SK-N-SH (cell line): ENCODE measurements at regions of chr2 and their contacts with region 1.

Region 1: DNA sequence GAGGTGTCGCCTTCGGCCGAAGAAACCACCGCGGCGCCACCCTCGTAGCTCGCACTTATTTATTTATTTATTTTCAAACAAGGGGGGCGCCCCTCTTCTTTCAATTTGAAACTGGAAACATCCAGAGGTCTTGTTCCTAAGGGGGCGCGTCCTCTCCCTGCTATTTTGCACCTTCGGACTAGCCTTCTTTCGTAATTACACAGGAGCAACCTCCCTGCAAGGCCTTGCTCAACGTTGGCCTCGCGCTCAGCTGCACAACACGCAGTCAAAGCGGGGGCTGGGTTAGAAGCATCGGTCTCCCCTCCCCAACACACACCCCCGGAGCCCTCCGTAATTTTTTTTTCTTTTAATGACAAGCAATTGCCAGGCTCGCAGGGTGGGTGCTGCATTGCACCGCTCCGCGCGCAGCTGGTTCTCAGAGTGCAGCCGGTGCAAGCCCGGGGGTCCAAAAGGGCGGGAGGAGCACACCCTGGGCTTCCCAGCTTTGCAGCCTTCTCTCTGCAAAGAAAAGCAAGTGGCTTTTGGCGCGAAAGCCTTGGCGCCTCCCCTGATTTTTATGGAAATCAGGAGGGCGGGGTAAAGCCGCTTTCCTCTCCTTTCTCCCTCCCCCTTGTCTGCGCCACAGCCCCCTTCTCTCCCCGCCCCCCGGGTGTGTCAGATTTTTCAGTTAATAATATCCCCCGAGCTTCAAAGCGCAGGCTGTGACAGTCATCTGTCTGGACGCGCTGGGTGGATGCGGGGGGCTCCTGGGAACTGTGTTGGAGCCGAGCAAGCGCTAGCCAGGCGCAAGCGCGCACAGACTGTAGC is at the start of gene MYCN:
- DNase-seq: peak; percentile 89
- H3K4me3 ChIP-seq: peak within 1 kb of the TSS; percentile 53 to 65
- H3K27ac ChIP-seq: peak within 1 kb of the TSS in 1 of 2 experiments; percentile 77; a peak in 2 of 4 replicates
- H3K4me1 ChIP-seq: peaks cover 0 to 31% of the 10 kb centered on the region in 2 experiments; a peak in 2 of 4 replicates
- H3K27me3 ChIP-seq: peaks cover 41% of the 10 kb centered on the region
- CTCF ChIP-seq: peak; percentile 28
- EP300 ChIP-seq: 0 out of 4 replicates have a peak, but pooled peaks of 1 of the 2 experiments have one; percentile 27
- RAD21 ChIP-seq: peak; percentile 90
- polyA plus RNA-seq, gene MYCN: 0.03 TPM in 1 of 2 replicates, not detected in the other

Region 2: GRCh38 chr2:15652801-15653200 is 287.3 kb before region 1 on chr2:
- CTCF ChIA-PET with region 1: interaction called, 13 read pairs
- POLR2A ChIA-PET with region 1: no interaction called
- DNase-seq: peak; percentile 42
- H3K4me3 ChIP-seq: no peak overlapping the region
- H3K27ac ChIP-seq: no peak overlapping the region
- H3K4me1 ChIP-seq: peaks cover 0 to 5% of the 10 kb centered on the region in 2 experiments; a peak in 1 of 4 replicates
- H3K27me3 ChIP-seq: no peaks in the 10 kb centered on the region
- CTCF ChIP-seq: no peak
- EP300 ChIP-seq: no peak
- RAD21 ChIP-seq: no peak

Region 3: DNA sequence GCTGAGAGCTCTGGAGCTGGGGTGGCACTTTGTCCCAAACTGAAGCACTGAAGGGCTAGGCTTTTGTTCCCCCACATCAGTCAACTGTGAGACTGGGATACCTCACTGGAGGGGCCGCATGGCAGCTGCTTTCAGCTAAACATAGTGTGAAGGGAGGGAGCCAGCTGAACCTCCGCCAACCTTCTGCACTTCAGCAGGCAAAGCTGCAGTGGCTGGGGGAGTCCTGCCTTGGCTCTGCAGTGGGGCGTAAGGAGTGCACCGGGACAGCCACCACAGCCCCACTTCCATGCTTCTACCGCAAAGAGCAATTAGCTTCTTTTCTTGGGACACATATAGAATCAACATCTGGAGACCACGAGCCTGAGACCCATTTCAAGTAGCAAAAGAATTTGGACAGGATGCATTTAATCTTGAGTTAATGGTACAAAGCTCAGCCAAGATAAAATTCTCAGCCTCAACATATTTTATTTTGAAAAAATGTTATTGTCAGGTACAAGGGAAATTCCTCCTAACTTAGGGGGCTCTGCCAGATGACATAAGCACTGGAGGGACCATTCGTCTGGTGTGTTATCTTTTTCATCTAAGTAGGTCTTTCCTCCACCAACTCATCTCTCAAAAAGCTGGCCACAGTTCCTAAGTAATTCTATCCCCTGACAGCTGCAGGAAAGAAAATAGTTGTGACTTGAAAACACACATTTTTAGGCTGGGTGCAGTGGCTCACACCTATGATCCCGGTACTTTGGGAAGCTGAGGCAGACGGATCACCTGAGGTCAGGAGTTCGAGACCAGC is 25.3 kb before region 1 on chr2:
- CTCF ChIA-PET with region 1: interaction called, 16 read pairs
- POLR2A ChIA-PET with region 1: no interaction called
- DNase-seq: no peak
- H3K4me3 ChIP-seq: no peak overlapping the region
- H3K27ac ChIP-seq: no peak overlapping the region
- H3K4me1 ChIP-seq: peaks cover 0 to 13% of the 10 kb centered on the region in 2 experiments; a peak in 1 of 4 replicates
- H3K27me3 ChIP-seq: no peaks in the 10 kb centered on the region
- CTCF ChIP-seq: no peak
- EP300 ChIP-seq: no peak
- RAD21 ChIP-seq: no peak

Region 4: DNA sequence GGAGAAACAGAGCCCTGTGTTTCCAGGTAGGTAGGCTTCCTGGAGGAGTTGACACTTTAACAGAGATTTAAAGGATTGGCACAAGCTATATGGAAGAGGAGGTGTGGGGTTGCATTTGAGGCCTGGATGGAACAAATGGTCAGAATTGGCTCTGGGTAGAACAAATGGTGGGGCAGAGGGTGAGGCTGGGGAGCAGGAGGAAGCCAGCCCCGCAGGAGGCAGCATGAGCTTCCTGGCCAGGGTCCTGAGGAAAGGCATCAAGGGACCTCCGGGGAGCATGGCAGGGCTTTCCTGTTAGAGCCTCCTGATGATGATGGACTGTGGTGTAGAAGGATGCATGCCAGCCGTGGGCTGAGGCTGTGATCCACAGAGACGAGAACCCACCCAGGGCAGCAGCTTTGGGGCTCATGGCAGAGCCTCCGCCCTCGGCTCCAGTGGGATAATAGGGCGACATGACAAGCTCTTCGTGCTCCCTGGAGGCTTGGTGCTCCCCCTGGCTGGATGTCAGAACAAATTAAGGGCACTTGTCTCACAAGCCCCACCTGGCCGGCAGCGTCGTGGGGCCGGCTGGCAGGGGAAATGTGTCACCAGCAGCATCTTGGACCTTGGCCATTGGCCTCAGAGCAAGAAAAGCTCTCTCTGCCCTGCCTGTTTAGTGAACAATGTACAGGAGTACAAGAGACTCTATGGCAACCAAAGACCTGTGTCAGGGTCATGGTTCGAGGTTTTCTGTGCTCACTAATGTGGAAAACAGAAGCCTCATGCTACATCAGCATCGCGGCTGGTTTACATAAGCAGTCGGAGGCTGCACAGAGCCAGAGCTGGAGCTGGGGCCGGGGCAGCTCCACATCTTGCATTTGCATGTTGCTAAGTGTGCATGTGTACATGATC is 153.8 kb after region 1 on chr2:
- CTCF ChIA-PET with region 1: interaction called, 12 read pairs
- POLR2A ChIA-PET with region 1: interaction called, 5 read pairs
- DNase-seq: peak; percentile 56
- H3K4me3 ChIP-seq: no peak overlapping the region
- H3K27ac ChIP-seq: peak overlapping the region in 1 of 2 experiments; percentile 60; a peak in 1 of 4 replicates
- H3K4me1 ChIP-seq: peaks cover 0 to 17% of the 10 kb centered on the region in 2 experiments; a peak in 1 of 4 replicates
- H3K27me3 ChIP-seq: no peaks in the 10 kb centered on the region
- CTCF ChIP-seq: no peak
- EP300 ChIP-seq: 0 out of 4 replicates have a peak, but pooled peaks of 1 of the 2 experiments have one; percentile 19
- RAD21 ChIP-seq: peak; percentile 10; the same call in 1 of the 2 replicates

Region 5: DNA sequence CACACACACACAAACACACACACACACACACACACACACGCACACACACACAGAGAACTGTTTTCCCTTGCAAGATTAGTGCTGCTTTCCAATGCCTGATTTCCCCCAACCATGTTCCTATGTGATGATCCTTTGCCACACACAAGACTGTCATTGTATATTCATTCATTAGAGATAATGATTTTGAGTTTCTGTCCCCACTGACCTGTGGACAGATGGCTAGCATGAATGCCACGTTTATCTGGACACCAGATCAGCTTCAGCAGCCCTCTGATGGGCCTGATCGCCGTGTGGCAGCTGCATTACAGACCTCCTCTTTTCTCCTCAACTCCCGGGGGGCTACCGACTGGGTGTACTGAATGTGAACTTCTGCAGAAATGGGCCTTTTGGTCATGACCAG is 353.3 kb after region 1 on chr2:
- CTCF ChIA-PET with region 1: interaction called, 21 read pairs
- POLR2A ChIA-PET with region 1: no interaction called
- DNase-seq: peak; percentile 73
- H3K4me3 ChIP-seq: no peak overlapping the region; a peak in 1 of 4 replicates
- H3K27ac ChIP-seq: peak overlapping the region in 1 of 2 experiments; percentile 71; a peak in 2 of 4 replicates
- H3K4me1 ChIP-seq: peaks cover 0 to 29% of the 10 kb centered on the region in 2 experiments; a peak in 2 of 4 replicates
- H3K27me3 ChIP-seq: no peaks in the 10 kb centered on the region
- CTCF ChIP-seq: no peak
- EP300 ChIP-seq: peak in 1 of 2 experiments; percentile 93; a peak in 2 of 4 replicates
- RAD21 ChIP-seq: peak; percentile 31

Region 6: DNA sequence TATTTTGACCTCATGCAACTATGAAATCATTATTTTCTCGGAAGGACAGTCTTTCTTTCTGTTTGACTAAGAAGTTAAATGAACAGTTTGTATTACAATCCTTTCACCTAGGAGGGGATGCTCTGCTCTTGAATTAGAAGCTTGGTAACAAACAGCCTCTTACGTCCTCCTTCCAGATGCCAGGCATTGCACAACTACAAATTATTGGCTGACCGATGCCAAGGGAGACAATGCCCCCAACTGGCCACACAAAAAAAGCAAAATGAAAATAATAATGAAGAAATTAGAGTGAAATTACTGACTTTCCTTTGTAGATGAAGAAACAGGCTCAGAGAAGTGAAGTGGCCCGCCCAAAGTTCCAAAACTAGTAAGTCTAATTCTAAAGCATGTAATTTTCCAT is 547.6 kb after region 1 on chr2:
- CTCF ChIA-PET with region 1: interaction called, 107 read pairs
- POLR2A ChIA-PET with region 1: interaction called, 5 read pairs
- DNase-seq: peak; percentile 73
- H3K4me3 ChIP-seq: no peak overlapping the region
- H3K27ac ChIP-seq: no peak overlapping the region
- H3K4me1 ChIP-seq: no peaks in the 10 kb centered on the region
- H3K27me3 ChIP-seq: no peaks in the 10 kb centered on the region
- CTCF ChIP-seq: no peak; the same call in 1 of the 2 replicates
- EP300 ChIP-seq: no peak
- RAD21 ChIP-seq: peak; percentile 99

Region 7: GRCh38 chr2:16525265-16525887 is 585.3 kb after region 1 on chr2:
- CTCF ChIA-PET with region 1: interaction called, 23 read pairs
- POLR2A ChIA-PET with region 1: no interaction called
- DNase-seq: peak; percentile 37
- H3K4me3 ChIP-seq: peak overlapping the region in 1 of 2 experiments; percentile 40; a peak in 1 of 4 replicates
- H3K27ac ChIP-seq: no peak overlapping the region
- H3K4me1 ChIP-seq: peaks cover 0 to 22% of the 10 kb centered on the region in 2 experiments; a peak in 2 of 4 replicates
- H3K27me3 ChIP-seq: no peaks in the 10 kb centered on the region
- CTCF ChIP-seq: peak; percentile 44
- EP300 ChIP-seq: no peak
- RAD21 ChIP-seq: peak; percentile 59